ENCODE measurements at regions of chrX and their contacts with region 1.

Region 1: GRCh38 chrX:40877887-40878286 is 142.5 kb upstream of the MED14 start:
- DNase-seq: no peak
- H3K4me3 Mint-ChIP-seq: no peak overlapping the region
- H3K27ac Mint-ChIP-seq: no peak overlapping the region
- H3K4me1 Mint-ChIP-seq: no peaks in the 10 kb centered on the region
- H3K27me3 Mint-ChIP-seq: no peaks in the 10 kb centered on the region

Region 2: GRCh38 chrX:40755291-40756249 is 122.3 kb before region 1 on chrX:
- CTCF ChIA-PET with region 1: no interaction called
- POLR2A ChIA-PET with region 1: no interaction called
- DNase-seq: no peak
- H3K4me3 Mint-ChIP-seq: no peak overlapping the region
- H3K27ac Mint-ChIP-seq: no peak overlapping the region
- H3K4me1 Mint-ChIP-seq: no peaks in the 10 kb centered on the region
- H3K27me3 Mint-ChIP-seq: peaks cover 5% of the 10 kb centered on the region

Region 3: GRCh38 chrX:41116948-41117347 is 239.1 kb after region 1 on chrX:
- CTCF ChIA-PET with region 1: interaction called, 37 read pairs
- POLR2A ChIA-PET with region 1: no interaction called
- DNase-seq: no peak
- H3K4me3 Mint-ChIP-seq: peak overlapping the region; percentile 66
- H3K27ac Mint-ChIP-seq: peak overlapping the region; percentile 72
- H3K4me1 Mint-ChIP-seq: peaks cover 66% of the 10 kb centered on the region
- H3K27me3 Mint-ChIP-seq: no peaks in the 10 kb centered on the region

Measured in activated CD4-positive, alpha-beta memory T cell treated with anti-CD3 and anti-CD28 coated beads, Interleukin-2, amount 10 ng/mL, durations not matched to agents 7 days and 5 days (primary cell).